ENCODE measurements at regions of chr20 and their contacts with region 1.

Region 1: GRCh38 chr20:45880988-45881788 is at the start of gene ZSWIM1:
- DNase-seq: peak; percentile 99
- H3K4me3 Mint-ChIP-seq: peak within 1 kb of the TSS; percentile 92
- H3K27ac Mint-ChIP-seq: peak within 1 kb of the TSS; percentile 91
- H3K4me1 Mint-ChIP-seq: peaks cover 41% of the 10 kb centered on the region
- H3K27me3 Mint-ChIP-seq: no peaks in the 10 kb centered on the region
- total RNA-seq, gene ZSWIM1: 7.7 to 8.1 TPM

Region 2: GRCh38 chr20:45765307-45765875 is 115.8 kb before region 1 on chr20:
- CTCF ChIA-PET with region 1: no interaction called
- POLR2A ChIA-PET with region 1: no interaction called
- intact Hi-C with region 1: no loop called
- DNase-seq: no peak
- H3K4me3 Mint-ChIP-seq: no peak overlapping the region
- H3K27ac Mint-ChIP-seq: no peak overlapping the region
- H3K4me1 Mint-ChIP-seq: no peaks in the 10 kb centered on the region
- H3K27me3 Mint-ChIP-seq: peaks cover 6% of the 10 kb centered on the region

Region 3: DNA sequence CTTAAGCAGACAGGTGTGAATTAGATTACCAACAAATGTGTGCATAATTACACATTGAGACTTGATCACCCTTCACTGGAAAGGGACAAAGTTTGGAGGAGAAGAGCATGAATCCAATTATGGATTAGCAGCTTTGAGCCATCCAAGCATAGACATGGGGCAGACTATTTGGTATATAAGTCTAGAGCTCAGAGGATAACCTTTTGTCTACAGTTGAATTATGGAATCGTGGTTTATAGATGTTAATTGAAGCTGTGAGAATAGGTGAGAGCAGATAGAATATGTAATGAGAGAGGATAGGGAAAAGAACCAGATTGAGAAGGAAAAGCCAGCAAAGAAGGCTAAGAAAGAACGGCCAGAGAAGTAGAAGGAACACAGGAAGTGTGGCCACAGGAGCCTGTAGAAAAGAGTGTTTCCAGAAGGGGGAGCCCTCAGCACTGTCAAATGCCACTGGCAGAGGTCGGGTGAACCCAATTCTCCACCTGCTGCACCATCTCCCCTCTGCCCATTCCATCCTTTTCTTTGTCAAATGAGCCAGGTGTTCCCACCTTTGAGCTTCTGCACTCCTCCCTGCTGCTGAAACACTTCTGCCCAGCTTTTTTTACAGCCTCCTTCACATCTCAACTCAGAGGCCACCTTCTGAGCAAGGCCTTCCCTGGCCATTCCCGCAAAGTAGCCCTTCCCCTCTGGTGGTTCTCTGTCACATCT is 82.1 kb before region 1 on chr20:
- CTCF ChIA-PET with region 1: interaction called, 10 read pairs
- POLR2A ChIA-PET with region 1: no interaction called
- intact Hi-C with region 1: loop called (anchors 5 kb)
- DNase-seq: peak; percentile 74
- H3K4me3 Mint-ChIP-seq: no peak overlapping the region
- H3K27ac Mint-ChIP-seq: peak overlapping the region; percentile 4
- H3K4me1 Mint-ChIP-seq: peaks cover 16% of the 10 kb centered on the region
- H3K27me3 Mint-ChIP-seq: no peaks in the 10 kb centered on the region

Region 4: GRCh38 chr20:45833030-45833882 is 47.9 kb before region 1 on chr20 and contains the start of gene SNX21:
- CTCF ChIA-PET with region 1: no interaction called
- POLR2A ChIA-PET with region 1: no interaction called
- intact Hi-C with region 1: loop called (anchors 10 kb)
- DNase-seq: peak; percentile 61
- H3K4me3 Mint-ChIP-seq: peak within 1 kb of the TSS; percentile 66
- H3K27ac Mint-ChIP-seq: no peak within 1 kb of the TSS
- H3K4me1 Mint-ChIP-seq: peaks cover 13% of the 10 kb centered on the region
- H3K27me3 Mint-ChIP-seq: no peaks in the 10 kb centered on the region
- total RNA-seq, gene SNX21: 1.8 to 2.2 TPM

Region 5: GRCh38 chr20:45857114-45857881 is 23.9 kb before region 1 on chr20 and contains the starts of genes ACOT8 and ZSWIM3:
- CTCF ChIA-PET with region 1: no interaction called
- POLR2A ChIA-PET with region 1: interaction called, 12 read pairs
- intact Hi-C with region 1: loop called (anchors 1 kb)
- DNase-seq: peak; percentile 96
- H3K4me3 Mint-ChIP-seq: peak within 1 kb of the TSS; percentile 97
- H3K27ac Mint-ChIP-seq: peak within 1 kb of the TSS; percentile 97
- H3K4me1 Mint-ChIP-seq: peaks cover 35% of the 10 kb centered on the region
- H3K27me3 Mint-ChIP-seq: no peaks in the 10 kb centered on the region
- total RNA-seq, gene ACOT8: 25.5 to 29.0 TPM
- total RNA-seq, gene ZSWIM3: 4.7 TPM

Region 6: DNA sequence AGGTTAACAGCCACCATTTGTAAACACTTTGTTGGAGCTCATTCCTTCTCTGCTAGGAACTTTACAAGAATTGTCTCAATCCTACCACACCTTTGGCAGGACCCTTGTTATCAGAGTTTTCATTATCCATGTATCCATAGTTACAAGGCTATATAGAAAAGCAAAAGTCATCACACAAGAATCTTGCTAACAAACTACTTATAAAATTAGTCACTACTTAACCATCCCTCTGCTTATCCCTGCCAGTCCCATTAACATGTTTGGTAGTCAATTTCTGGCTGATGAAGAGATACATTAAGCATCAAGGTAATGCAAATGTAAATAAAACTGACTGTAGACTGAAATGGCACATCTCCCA is 13.4 kb before region 1 on chr20:
- CTCF ChIA-PET with region 1: no interaction called
- POLR2A ChIA-PET with region 1: no interaction called
- intact Hi-C with region 1: no loop called
- DNase-seq: no peak
- H3K4me3 Mint-ChIP-seq: no peak overlapping the region
- H3K27ac Mint-ChIP-seq: no peak overlapping the region
- H3K4me1 Mint-ChIP-seq: no peaks in the 10 kb centered on the region
- H3K27me3 Mint-ChIP-seq: no peaks in the 10 kb centered on the region

Region 7: DNA sequence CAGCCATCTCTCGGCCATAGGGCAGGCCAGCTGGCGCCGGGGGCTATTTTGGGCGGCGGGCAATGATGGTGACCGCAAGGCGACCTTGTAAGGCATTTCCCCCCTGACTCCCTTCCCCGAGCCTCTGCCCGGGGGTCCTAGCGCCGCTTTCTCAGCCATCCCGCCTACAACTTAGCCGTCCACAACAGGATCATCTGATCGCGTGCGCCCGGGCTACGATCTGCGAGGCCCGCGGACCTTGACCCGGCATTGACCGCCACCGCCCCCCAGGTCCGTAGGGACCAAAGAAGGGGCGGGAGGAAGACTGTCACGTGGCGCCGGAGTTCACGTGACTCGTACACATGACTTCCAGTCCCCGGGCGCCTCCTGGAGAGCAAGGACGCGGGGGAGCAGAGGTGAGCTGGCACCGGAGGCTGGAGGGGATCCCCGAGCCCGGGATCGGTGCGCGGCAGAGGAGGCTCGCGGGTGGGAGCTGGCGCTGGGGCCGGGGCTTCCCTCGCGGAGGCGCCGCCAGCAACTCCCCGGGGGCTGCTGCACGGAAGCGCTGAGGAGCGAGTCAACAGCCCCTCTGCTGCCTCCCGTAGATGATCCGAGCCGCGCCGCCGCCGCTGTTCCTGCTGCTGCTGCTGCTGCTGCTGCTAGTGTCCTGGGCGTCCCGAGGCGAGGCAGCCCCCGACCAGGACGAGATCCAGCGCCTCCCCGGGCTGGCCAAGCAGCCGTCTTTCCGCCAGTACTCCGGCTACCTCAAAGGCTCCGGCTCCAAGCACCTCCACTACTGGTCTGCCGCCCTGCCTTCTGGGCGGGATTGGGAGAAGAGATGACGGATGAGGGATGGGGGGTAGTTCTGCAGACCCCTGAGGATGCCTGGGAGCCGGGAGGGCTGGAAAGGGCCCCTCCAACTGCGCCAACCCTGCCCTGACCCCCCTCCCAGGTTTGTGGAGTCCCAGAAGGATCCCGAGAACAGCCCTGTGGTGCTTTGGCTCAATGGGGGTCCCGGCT is 10.1 kb after region 1 on chr20 and contains the starts of genes CTSA and NEURL2:
- CTCF ChIA-PET with region 1: interaction called, 13 read pairs
- POLR2A ChIA-PET with region 1: interaction called, 9 read pairs
- intact Hi-C with region 1: loop called (anchors 1 kb)
- DNase-seq: peak; percentile 92
- H3K4me3 Mint-ChIP-seq: peak within 1 kb of the TSS; percentile 85
- H3K27ac Mint-ChIP-seq: peak within 1 kb of the TSS; percentile 81
- H3K4me1 Mint-ChIP-seq: peaks cover 32% of the 10 kb centered on the region
- H3K27me3 Mint-ChIP-seq: no peaks in the 10 kb centered on the region
- total RNA-seq, gene CTSA: 49.8 to 54.8 TPM
- total RNA-seq, gene NEURL2: 2.3 to 2.5 TPM

Region 8: GRCh38 chr20:45987108-45987780 is 106.1 kb after region 1 on chr20:
- CTCF ChIA-PET with region 1: no interaction called
- POLR2A ChIA-PET with region 1: no interaction called
- intact Hi-C with region 1: no loop called
- DNase-seq: peak; percentile 85
- H3K4me3 Mint-ChIP-seq: no peak overlapping the region
- H3K27ac Mint-ChIP-seq: no peak overlapping the region
- H3K4me1 Mint-ChIP-seq: peaks cover 3% of the 10 kb centered on the region
- H3K27me3 Mint-ChIP-seq: no peaks in the 10 kb centered on the region

Measured in activated CD4-positive, alpha-beta memory T cell treated with anti-CD3 and anti-CD28 coated beads for 36 hours (primary cell).